SK-MEL-5 (cell line): ENCODE measurements at regions of chr5 and their contacts with region 1.

Region 1: DNA sequence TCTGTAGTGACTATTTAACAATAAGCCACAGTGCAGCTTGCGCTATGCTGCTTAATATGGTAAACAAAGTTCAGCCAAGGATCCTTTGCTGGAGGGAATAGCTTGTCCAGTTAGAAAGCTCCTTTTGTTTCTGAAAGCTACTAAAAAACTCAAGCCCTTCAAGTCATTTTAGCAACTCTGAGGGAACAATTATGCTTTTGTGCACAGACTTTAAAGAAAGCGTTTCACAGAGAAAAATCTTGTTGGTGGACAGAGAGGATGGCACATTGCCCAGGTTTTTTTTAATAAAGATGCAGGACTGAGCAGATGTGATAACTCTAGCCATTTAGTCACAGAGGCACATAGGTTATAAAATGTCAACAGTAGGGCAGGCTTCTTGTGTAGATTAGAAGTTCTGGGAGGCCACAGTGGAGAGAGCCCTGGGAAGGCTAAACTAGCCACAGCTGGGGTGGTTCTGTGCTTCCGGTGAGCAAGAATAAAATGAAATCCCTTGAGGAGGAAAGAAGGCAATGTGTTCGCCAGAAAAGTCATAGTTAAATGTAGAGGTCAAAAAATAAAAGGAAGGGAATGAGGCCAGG is 63.4 kb downstream of the ALDH7A1 start:
- DNase-seq: peak; percentile 99

Region 2: DNA sequence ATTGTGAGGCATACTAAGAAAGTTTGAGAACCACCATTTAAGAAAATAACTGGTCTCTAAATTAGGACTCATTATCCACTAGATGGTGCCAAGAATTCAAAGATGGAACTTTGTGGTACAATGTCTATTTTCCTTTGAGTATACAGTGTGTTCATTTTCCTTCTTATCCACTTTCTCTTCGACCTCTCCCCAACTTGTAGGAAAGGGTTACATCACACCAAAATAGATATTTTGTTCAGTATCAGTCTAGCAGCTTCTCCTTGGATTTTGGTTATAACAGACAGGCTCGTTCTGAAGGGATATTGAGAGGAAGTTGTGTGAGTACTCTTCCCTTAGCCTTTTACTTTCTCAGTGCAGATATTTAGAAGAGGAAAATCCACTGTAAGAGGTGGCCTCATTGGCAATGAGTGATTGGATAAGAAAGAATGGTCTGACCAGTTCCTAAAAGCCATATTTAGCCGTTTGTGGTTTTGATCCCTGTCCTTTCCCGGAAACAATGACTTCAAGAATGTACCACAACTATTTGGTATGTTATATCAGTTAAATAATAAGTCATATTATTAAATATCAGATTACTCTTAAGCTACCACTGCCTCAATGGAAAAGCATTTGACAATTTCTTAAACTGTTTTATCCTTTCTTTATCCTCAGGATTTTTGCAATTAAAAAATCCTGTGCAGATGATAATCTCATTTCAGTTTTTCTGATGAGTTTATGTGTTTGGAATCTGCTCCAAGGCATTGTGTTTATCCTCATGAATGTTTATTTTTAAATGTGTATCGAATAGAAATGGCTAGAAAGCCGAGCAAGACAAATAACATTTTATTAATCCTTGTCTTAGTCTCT is 177.4 kb before region 1 on chr5:
- in situ Hi-C with region 1: loop called (anchors 5 kb)
- DNase-seq: peak; percentile 87